Mammary epithelial cell (primary cell): ENCODE measurements at regions of chr20 and their contacts with region 1.

Region 1: GRCh38 chr20:37501940-37502339 is 19.1 kb upstream of the NNAT start:
- DNase-seq: no peak
- H3K4me3 ChIP-seq: no peak overlapping the region
- H3K27ac ChIP-seq: no peak overlapping the region
- H3K4me1 ChIP-seq: no peaks in the 10 kb centered on the region
- H3K27me3 ChIP-seq: no peaks in the 10 kb centered on the region
- CTCF ChIP-seq: no peak

Region 2: GRCh38 chr20:37439223-37439933 is 62.6 kb before region 1 on chr20:
- CTCF ChIA-PET with region 1: no interaction called
- dilution Hi-C with region 1: loop called (anchors 5 kb)
- in situ Hi-C with region 1: no loop called
- intact Hi-C with region 1: no loop called
- DNase-seq: no peak
- H3K4me3 ChIP-seq: no peak overlapping the region
- H3K27ac ChIP-seq: no peak overlapping the region
- H3K4me1 ChIP-seq: no peaks in the 10 kb centered on the region
- H3K27me3 ChIP-seq: no peaks in the 10 kb centered on the region
- CTCF ChIP-seq: no peak

Region 3: DNA sequence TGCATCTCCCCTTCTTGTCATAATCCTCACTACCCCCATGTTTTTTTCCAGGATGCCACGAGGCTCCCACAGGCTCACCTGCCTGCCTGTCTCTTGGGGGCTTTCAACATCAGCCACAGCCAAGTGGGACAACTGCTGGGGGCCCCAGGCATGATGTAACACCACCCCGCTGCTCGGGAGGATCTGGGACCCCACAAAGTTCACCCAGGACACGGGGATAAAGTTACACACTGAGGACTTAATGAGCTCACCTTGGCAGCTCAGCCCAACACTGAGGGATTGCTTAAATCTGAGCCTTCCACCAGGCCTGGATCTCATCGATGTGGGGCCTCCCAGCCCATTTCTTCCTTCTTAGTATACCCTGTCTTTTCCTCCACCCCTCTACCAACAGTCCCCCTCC is 37.3 kb before region 1 on chr20:
- CTCF ChIA-PET with region 1: no interaction called
- dilution Hi-C with region 1: loop called (anchors 5 kb)
- in situ Hi-C with region 1: no loop called
- intact Hi-C with region 1: no loop called
- DNase-seq: no peak
- H3K4me3 ChIP-seq: no peak overlapping the region
- H3K27ac ChIP-seq: no peak overlapping the region
- H3K4me1 ChIP-seq: no peaks in the 10 kb centered on the region
- H3K27me3 ChIP-seq: no peaks in the 10 kb centered on the region
- CTCF ChIP-seq: no peak